ENCODE measurements at regions of chr6 and their contacts with region 1.

Region 1: GRCh38 chr6:154800338-154800737 is 67.1 kb downstream of the SCAF8 start:
- DNase-seq: no peak
- ATAC-seq: no peak

Region 2: DNA sequence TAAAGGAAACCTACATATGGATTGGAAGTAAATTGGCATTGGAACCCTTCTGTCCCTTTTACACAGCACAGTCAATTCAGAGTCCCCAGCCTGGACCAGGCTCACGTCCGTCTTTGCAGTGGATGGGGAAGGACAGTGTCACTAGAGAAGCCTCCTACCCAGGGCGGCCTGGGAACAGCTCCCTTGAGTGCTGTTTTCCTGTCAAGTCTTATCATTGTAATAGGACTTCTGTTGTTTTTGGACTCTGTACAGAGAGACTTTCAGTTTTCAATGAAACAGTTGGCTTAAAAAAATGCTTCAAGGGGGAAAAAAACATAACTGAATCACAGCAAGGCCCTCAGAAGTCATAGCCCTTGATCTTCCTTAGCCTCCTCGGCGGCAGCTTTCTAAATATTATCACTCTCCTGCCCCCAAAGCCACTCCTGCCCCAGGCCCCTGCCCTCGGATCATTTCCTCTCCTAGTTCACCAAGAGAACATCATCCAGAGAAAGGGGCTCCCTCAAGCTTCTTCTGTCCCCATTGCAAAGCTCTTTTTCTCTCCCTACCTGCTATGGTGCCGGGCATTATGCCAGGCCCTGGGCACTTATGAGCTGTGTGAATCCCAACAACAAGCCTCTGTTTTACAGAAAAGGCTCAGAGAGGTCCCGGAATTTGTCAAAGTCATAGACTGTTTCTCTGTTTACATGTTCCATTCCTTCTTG is 252.1 kb before region 1 on chr6:
- intact Hi-C with region 1: no loop called
- DNase-seq: no peak
- ATAC-seq: no peak

Region 3: DNA sequence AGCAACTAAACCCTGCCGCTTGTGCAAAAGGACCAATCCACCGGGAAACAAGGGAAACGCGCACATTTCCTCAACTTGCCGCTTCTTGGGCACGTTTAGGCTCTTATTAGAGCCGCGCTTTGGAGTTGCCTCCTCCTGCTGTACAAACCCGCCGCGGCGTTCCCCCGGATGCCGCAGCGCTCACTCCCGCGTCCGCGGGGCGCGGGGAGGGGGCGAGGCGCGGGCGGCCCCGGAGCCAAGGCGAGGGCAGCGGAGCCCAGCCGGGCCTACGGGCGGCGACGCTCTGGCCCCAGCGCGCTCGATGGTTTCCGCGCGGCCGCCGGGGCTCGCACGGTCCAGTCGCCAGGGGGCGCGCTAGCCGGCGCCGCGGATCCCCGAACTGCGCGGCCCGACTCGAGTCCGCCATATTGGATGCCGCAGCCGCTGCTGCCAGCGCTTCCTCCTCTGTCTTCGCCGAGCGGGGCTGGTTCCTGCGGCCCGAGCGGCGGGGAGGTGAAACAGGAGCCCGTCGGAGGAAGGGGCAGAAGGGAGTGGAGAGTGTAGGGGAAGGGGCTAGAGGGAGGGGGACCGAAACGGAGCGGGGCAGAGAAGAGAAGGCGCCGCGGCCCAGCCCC is 67.2 kb before region 1 on chr6 and contains the start of gene SCAF8:
- intact Hi-C with region 1: loop called (anchors 5 kb)
- DNase-seq: peak; percentile 96
- ATAC-seq: peak; percentile 91
- total RNA-seq, gene SCAF8: 47.4 TPM

Measured in Right ventricle myocardium inferior (tissue), 1 donor.